CD4-positive, alpha-beta memory T cell (primary cell): ENCODE measurements at regions of chr9 and their contacts with region 1.

Region 1: DNA sequence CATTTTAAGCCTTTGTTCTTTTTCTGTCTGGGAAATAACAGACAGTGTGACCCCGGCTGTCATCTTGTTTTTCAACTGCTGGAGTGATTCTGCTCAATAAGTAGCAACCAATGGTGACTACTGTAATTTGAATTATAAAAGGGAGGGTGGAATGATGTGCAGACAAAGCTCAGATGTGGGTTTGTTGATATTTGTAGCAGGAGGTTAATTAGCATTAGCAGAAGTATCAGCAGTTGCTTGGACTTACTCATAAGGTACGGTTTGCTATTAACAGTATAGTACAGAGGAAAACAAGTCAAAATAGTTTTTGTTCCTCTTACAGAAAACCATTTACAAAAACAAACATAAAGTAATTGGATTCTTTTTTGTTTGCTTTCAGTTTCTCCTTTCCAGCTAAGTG is 140.4 kb downstream of the TUSC1 start:
- DNase-seq: no peak
- H3K4me3 ChIP-seq: no peak overlapping the region
- H3K4me3 Mint-ChIP-seq: no peak overlapping the region
- H3K27ac ChIP-seq: no peak overlapping the region
- H3K27ac Mint-ChIP-seq: no peak overlapping the region
- H3K4me1 ChIP-seq: no peaks in the 10 kb centered on the region
- H3K4me1 Mint-ChIP-seq: no peaks in the 10 kb centered on the region
- H3K27me3 ChIP-seq: no peaks in the 10 kb centered on the region
- H3K27me3 Mint-ChIP-seq: no peaks in the 10 kb centered on the region

Region 2: GRCh38 chr9:25481372-25482104 is 56.3 kb before region 1 on chr9:
- CTCF ChIA-PET with region 1: no interaction called
- POLR2A ChIA-PET with region 1: no interaction called
- intact Hi-C with region 1: loop called (anchors 10 kb)
- DNase-seq: no peak
- H3K4me3 ChIP-seq: no peak overlapping the region
- H3K4me3 Mint-ChIP-seq: no peak overlapping the region
- H3K27ac ChIP-seq: no peak overlapping the region
- H3K27ac Mint-ChIP-seq: no peak overlapping the region
- H3K4me1 ChIP-seq: no peaks in the 10 kb centered on the region
- H3K4me1 Mint-ChIP-seq: no peaks in the 10 kb centered on the region
- H3K27me3 ChIP-seq: no peaks in the 10 kb centered on the region
- H3K27me3 Mint-ChIP-seq: no peaks in the 10 kb centered on the region

Region 3: GRCh38 chr9:25551577-25551976 is 13.8 kb after region 1 on chr9:
- CTCF ChIA-PET with region 1: no interaction called
- POLR2A ChIA-PET with region 1: no interaction called
- intact Hi-C with region 1: no loop called
- DNase-seq: no peak
- H3K4me3 ChIP-seq: no peak overlapping the region
- H3K4me3 Mint-ChIP-seq: no peak overlapping the region
- H3K27ac ChIP-seq: no peak overlapping the region
- H3K27ac Mint-ChIP-seq: no peak overlapping the region
- H3K4me1 ChIP-seq: no peaks in the 10 kb centered on the region
- H3K4me1 Mint-ChIP-seq: no peaks in the 10 kb centered on the region
- H3K27me3 ChIP-seq: no peaks in the 10 kb centered on the region
- H3K27me3 Mint-ChIP-seq: no peaks in the 10 kb centered on the region

Region 4: GRCh38 chr9:25584611-25585010 is 46.8 kb after region 1 on chr9:
- CTCF ChIA-PET with region 1: no interaction called
- POLR2A ChIA-PET with region 1: no interaction called
- intact Hi-C with region 1: no loop called
- DNase-seq: no peak
- H3K4me3 ChIP-seq: no peak overlapping the region
- H3K4me3 Mint-ChIP-seq: no peak overlapping the region
- H3K27ac ChIP-seq: no peak overlapping the region
- H3K27ac Mint-ChIP-seq: no peak overlapping the region
- H3K4me1 ChIP-seq: no peaks in the 10 kb centered on the region
- H3K4me1 Mint-ChIP-seq: no peaks in the 10 kb centered on the region
- H3K27me3 ChIP-seq: no peaks in the 10 kb centered on the region
- H3K27me3 Mint-ChIP-seq: no peaks in the 10 kb centered on the region